H1 (cell line): ENCODE measurements at regions of chr1 and their contacts with region 1.

Region 1: GRCh38 chr1:154669464-154670282 is 61.7 kb upstream of the ADAR start:
- DNase-seq: peak; percentile 73 to 75
- H3K4me3 ChIP-seq: no peak overlapping the region
- H3K27ac ChIP-seq: no peak overlapping the region
- H3K4me1 ChIP-seq: peaks cover 0 to 2% (median 0%) of the 10 kb centered on the region in 4 experiments; a peak in 1 of 7 replicates
- H3K27me3 ChIP-seq: no peaks in the 10 kb centered on the region
- CTCF ChIP-seq: peak; percentile 88 to 96 (median 95)
- EP300 ChIP-seq: no peak
- POLR2A ChIP-seq: no peak
- RAD21 ChIP-seq: peak; percentile 99

Region 2: GRCh38 chr1:154635162-154635561 is 34.5 kb before region 1 on chr1:
- CTCF ChIA-PET with region 1: no interaction called
- POLR2A ChIA-PET with region 1: no interaction called
- DNase-seq: no peak
- H3K4me3 ChIP-seq: no peak overlapping the region
- H3K27ac ChIP-seq: no peak overlapping the region
- H3K4me1 ChIP-seq: no peaks in the 10 kb centered on the region
- H3K27me3 ChIP-seq: no peaks in the 10 kb centered on the region
- CTCF ChIP-seq: no peak
- EP300 ChIP-seq: no peak
- POLR2A ChIP-seq: no peak
- RAD21 ChIP-seq: no peak

Region 3: GRCh38 chr1:154682254-154682653 is 12.6 kb after region 1 on chr1:
- CTCF ChIA-PET with region 1: interaction called, 12 read pairs
- POLR2A ChIA-PET with region 1: no interaction called
- DNase-seq: no peak
- H3K4me3 ChIP-seq: no peak overlapping the region
- H3K27ac ChIP-seq: no peak overlapping the region
- H3K4me1 ChIP-seq: no peaks in the 10 kb centered on the region; a peak in 1 of 7 replicates
- H3K27me3 ChIP-seq: no peaks in the 10 kb centered on the region
- CTCF ChIP-seq: peak in 1 of 3 experiments; percentile 16; a peak in 1 of 4 replicates
- EP300 ChIP-seq: no peak
- POLR2A ChIP-seq: no peak
- RAD21 ChIP-seq: no peak; a peak in 1 of 4 replicates

Region 4: DNA sequence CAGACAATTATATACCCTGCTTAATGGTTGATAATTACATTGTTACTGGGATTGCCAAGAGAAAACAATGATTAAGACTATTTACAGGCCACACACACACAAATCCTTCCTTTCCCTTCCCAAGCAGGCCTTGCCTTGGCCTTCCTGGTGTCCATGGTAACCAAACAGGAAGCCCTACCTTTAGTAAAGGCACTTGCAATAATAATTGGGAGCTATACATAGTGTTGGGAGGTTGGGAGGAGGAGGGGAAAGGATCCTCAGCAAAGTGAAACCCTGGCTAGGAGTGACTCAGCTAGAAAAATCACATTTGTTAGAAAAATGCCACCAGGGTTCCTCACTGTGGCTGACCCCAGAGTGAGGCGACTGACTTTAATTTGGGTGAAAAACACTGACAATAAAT is 60.6 kb after region 1 on chr1:
- CTCF ChIA-PET with region 1: interaction called, 14 read pairs
- POLR2A ChIA-PET with region 1: no interaction called
- DNase-seq: no peak
- H3K4me3 ChIP-seq: no peak overlapping the region
- H3K27ac ChIP-seq: no peak overlapping the region
- H3K4me1 ChIP-seq: peaks cover 3 to 17% (median 8%) of the 10 kb centered on the region in 4 experiments; a peak in 6 of 7 replicates
- H3K27me3 ChIP-seq: no peaks in the 10 kb centered on the region
- CTCF ChIP-seq: no peak
- EP300 ChIP-seq: no peak
- POLR2A ChIP-seq: no peak
- RAD21 ChIP-seq: no peak

Region 5: DNA sequence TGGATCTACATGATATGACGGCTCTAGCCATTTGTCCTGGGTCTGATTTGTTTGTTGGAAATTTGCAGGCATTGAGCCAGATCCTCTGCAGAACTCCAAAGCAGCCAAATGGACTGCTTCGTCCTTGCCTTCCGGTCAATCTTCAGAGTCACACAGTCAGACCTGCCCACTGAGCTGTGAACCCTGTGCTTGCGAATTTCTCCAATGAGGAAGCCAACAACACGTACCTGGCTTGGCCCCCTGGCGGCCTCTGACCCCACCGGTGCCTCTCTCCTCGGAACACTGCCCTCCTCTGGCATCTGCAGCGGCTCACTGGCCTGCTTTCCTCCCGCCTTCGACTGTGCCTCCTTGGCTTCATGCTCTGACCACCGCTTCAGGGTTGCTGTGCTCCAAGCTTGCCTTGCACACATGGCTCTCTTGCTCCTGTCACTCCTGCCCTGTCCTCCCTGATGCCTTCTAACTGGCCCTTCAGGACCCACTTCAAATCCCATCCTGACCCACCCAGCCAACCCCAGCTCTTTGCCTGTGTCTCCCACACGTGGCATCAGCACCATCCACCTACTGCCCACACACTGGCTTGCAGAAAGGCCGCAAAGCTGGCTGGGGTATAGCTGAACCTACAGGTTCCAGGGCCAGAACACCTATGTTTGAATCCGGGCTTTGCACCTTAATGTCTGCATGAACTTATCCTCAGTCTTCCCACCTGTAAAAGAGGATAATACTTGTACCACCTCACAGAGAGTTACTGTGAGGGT is 72.2 kb after region 1 on chr1:
- CTCF ChIA-PET with region 1: interaction called, 30 read pairs
- POLR2A ChIA-PET with region 1: no interaction called
- DNase-seq: peak; percentile 56 to 85
- H3K4me3 ChIP-seq: no peak overlapping the region
- H3K27ac ChIP-seq: no peak overlapping the region
- H3K4me1 ChIP-seq: peaks cover 0 to 17% (median 11%) of the 10 kb centered on the region in 4 experiments; a peak in 6 of 7 replicates
- H3K27me3 ChIP-seq: no peaks in the 10 kb centered on the region
- CTCF ChIP-seq: peak; percentile 98 to 99 (median 98)
- EP300 ChIP-seq: no peak
- POLR2A ChIP-seq: no peak
- RAD21 ChIP-seq: peak; percentile 69 to 76

Region 6: DNA sequence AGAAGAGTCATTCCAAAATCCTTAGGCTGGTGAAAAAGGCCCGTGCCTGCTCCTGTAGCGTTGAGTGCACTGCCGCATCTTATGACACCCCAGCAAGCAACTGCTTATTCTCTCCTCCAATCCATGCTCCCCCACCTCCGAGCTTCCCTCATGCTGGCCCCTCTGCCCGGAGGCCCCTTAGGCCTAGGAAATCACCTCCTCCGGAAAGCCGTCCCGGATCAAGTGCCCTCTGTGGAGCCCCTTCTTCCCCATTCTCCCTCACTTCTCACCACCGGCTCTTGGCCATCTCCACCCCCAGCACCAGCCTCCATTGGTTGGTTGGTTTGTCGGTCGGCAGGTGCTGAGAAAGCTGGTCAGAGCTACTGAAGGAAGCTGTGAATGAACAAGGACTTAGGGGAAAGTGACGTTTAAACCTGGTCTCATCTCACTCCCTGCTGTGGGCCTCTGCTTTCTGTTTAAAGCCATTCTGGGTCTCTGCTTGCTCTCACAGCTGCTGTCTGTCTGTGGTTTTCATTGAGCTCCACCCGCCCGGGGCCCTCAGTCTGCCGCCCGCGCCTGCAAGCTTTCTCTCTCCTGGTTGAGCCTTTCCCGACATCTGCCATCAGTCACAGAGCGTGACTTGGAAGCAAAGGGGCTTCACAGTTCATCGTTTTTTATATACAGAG is 78.2 kb after region 1 on chr1:
- CTCF ChIA-PET with region 1: interaction called, 30 read pairs
- POLR2A ChIA-PET with region 1: no interaction called
- DNase-seq: no peak
- H3K4me3 ChIP-seq: no peak overlapping the region
- H3K27ac ChIP-seq: no peak overlapping the region
- H3K4me1 ChIP-seq: peaks cover 0 to 27% (median 11%) of the 10 kb centered on the region in 4 experiments; a peak in 6 of 7 replicates
- H3K27me3 ChIP-seq: no peaks in the 10 kb centered on the region
- CTCF ChIP-seq: no peak
- EP300 ChIP-seq: no peak
- POLR2A ChIP-seq: no peak
- RAD21 ChIP-seq: no peak

Region 7: DNA sequence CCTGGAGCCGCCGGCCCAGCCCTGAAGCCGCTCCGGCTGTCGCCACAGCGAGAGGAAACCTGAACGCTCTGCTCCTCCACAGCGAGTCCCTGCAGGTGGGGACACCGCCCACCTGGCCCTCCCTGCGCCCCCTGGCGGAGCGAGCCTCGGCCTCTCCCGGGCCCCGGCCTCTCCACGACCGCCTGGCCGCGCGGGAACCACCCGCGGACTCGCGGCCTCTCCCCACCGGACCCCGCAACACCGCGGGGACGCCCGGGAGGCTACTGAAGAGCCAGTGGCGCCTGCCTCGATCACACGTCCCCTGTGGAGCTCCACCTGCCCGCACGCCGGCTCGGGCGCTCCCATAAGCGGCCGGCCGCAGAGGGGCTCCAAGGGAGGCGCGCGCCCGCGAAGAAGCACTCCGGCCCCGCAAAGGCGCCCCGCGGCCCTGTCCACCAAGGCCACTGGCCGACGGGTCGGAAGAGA is 90.8 kb after region 1 on chr1:
- CTCF ChIA-PET with region 1: interaction called, 31 read pairs
- POLR2A ChIA-PET with region 1: interaction called, 3 read pairs
- DNase-seq: peak in 1 of 2 experiments; percentile 93
- H3K4me3 ChIP-seq: peak overlapping the region; percentile 33 to 72 (median 38); a peak in 7 of 8 replicates
- H3K27ac ChIP-seq: no peak overlapping the region
- H3K4me1 ChIP-seq: peaks cover 0 to 2% (median under 1%) of the 10 kb centered on the region in 4 experiments; a peak in 1 of 7 replicates
- H3K27me3 ChIP-seq: peaks cover 0 to 8% (median 1%) of the 10 kb centered on the region in 4 experiments; a peak in 4 of 7 replicates
- CTCF ChIP-seq: peak; percentile 72 to 87 (median 72)
- EP300 ChIP-seq: no peak
- POLR2A ChIP-seq: no peak
- RAD21 ChIP-seq: peak; percentile 55 to 70

Region 8: DNA sequence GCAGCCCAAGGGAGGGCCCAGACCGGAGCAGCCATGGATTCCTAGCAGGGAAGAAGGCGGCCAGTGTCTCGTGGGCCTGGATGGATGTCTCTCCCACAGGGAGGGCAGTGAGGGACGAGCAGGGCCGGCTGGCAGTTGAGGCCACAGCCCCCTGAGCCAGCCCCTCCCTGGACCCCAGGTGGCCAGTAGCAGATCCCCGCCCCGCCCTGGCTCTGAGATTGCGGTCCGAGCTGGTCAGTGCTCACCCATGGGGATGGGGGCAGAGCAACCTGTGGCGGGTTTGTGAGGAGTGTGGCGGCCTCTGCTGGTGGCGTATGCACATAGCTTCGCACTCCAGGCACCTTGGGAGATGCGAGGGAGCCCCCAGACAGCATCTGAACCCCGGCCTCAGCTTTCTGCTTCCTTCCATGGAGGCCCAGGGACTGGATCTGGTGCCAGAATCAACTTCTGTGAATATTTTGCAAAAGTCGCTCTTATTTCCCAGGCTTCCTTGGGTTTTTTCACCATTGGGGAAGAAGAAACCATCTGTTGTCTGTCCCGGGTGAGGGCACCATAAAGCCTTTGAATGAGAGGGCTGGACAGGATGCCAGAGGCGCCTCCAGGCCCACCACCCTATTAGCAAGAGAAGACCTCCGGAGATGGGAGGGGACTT is 208.8 kb after region 1 on chr1:
- CTCF ChIA-PET with region 1: interaction called, 13 read pairs
- POLR2A ChIA-PET with region 1: no interaction called
- DNase-seq: peak; percentile 51 to 93
- H3K4me3 ChIP-seq: peak overlapping the region in 2 of 4 experiments; percentile 10 to 27; a peak in 2 of 8 replicates
- H3K27ac ChIP-seq: no peak overlapping the region
- H3K4me1 ChIP-seq: peaks cover 0 to 6% (median 0%) of the 10 kb centered on the region in 4 experiments; a peak in 1 of 7 replicates
- H3K27me3 ChIP-seq: no peaks in the 10 kb centered on the region
- CTCF ChIP-seq: peak; percentile 95 to 97 (median 96)
- EP300 ChIP-seq: no peak
- POLR2A ChIP-seq: no peak
- RAD21 ChIP-seq: peak; percentile 98 to 99